Activated CD4-positive, alpha-beta memory T cell treated with anti-CD3 and anti-CD28 coated beads for 36 hours (primary cell): ENCODE measurements at regions of chr4 and their contacts with region 1.

Region 1: DNA sequence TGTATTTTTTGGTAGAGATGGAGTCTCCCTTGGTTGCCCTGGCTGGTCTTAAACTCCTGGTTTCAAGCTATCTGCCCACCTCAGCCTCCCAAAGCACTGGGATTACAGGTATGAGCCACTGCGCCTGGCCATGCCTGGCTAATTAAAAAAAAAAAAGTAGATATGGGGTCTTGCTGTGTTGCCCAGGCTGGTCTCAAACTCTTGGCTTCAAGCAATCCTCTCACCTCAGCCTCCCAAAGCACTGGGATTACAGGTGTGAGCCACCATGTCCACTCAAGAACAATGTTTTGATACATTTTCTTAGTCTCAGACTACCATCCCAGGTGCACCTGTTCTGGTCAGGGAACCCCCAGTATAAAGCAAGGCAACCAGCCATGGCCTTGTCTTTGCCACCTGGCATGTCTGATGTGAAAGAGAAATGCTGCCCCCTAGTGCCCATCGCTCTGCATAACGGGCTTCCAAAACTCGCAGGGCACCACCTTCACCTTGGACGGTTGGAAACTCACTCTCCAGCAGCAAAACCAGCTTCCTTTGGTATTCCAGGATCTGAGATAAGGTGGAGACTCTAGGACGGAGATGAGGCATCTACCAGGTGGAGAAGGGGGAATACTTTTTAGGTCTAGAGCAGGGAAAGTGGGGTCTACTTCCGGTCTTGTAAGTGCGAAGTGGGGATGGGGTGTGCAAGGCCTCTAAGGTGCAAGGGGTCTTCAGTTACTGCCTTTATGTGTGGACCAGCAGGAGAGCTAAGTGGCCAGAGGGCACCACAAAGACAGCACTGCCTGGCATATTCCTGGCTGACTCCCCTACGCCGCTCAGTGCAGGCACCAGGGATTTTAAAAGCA is 47.7 kb upstream of the AFAP1 start:
- DNase-seq: peak; percentile 87
- H3K4me3 Mint-ChIP-seq: no peak overlapping the region
- H3K27ac Mint-ChIP-seq: no peak overlapping the region
- H3K4me1 Mint-ChIP-seq: peaks cover 7% of the 10 kb centered on the region
- H3K27me3 Mint-ChIP-seq: peaks cover 4% of the 10 kb centered on the region

Region 2: DNA sequence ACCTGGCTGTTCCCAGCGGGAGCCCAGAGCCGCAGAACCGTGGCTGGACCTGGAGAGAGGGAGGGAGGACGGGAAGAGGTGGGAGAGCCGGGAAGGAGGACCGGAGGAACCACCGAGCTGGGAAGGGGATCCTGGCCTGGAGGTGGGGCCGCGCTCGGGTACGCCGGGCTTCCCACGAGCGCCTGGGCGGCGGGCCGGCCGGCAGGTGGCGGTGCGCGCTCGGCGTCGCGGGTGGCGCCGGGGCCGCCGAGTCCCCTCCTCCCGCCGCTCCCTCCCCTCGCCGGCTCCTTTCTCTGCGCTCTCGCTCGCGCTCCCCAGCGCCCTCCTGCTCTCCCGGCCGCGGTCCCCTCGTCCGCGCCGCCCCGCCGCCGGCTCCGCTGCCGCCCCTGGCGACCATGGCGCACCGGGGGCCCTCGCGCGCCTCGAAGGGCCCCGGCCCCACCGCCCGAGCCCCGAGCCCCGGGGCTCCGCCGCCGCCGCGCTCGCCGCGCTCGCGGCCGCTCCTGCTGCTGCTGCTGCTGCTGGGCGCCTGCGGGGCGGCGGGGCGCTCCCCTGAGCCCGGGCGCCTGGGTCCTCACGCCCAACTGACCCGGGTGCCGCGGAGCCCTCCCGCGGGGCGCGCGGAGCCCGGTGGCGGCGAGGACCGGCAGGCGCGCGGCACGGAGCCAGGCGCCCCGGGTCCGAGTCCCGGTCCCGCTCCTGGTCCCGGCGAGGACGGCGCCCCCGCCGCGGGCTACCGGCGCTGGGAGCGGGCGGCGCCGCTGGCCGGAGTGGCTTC is 794.9 kb before region 1 on chr4 and contains the start of gene SORCS2:
- CTCF ChIA-PET with region 1: interaction called, 3 read pairs
- POLR2A ChIA-PET with region 1: no interaction called
- intact Hi-C with region 1: loop called (anchors 10 kb)
- DNase-seq: peak; percentile 60
- H3K4me3 Mint-ChIP-seq: no peak within 1 kb of the TSS
- H3K27ac Mint-ChIP-seq: no peak within 1 kb of the TSS
- H3K4me1 Mint-ChIP-seq: peaks cover 2% of the 10 kb centered on the region
- H3K27me3 Mint-ChIP-seq: peaks cover 55% of the 10 kb centered on the region
- total RNA-seq, gene SORCS2: 0.07 TPM

Region 3: DNA sequence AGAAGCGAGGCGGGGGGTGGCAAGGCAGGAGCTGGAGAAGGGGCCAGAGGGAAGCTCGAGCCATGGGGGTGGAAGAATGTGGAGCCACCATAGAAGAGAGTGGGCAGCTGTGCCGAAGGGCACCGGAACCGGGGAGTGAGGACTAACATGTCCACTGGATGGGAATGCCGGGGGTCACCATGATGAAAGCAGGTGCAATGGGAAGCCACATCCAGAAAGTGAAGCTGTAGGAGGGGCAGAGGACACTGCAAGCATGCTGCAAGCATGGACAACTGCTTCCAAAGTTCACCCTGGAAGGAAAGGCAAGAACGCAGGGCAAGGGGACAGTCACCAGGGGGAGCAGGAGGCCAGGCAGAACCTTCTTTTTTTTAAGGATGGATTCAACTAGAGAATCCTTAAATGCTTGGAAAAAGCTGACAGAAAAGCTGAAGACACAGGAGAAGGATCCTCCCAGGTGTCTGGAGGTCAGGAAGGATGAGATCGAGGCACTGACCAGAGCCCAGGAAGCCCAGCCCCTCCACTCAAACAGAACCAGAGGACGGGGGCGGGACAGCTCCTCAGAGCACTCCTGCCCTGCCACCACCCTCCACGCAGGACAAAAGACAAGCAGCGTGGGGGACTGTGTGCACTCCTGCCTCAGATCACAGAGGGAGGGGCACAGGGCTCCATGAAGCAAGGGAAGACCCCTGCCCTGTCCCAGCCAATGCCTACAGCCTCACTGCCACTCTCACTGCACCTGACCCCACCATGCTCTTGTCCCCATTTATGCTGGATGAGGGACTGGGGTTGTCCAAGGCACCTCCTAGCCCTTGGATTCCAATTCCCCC is 216.9 kb before region 1 on chr4:
- CTCF ChIA-PET with region 1: interaction called, 14 read pairs
- POLR2A ChIA-PET with region 1: no interaction called
- intact Hi-C with region 1: no loop called
- DNase-seq: peak; percentile 48
- H3K4me3 Mint-ChIP-seq: no peak overlapping the region
- H3K27ac Mint-ChIP-seq: peak overlapping the region; percentile 78
- H3K4me1 Mint-ChIP-seq: peaks cover 27% of the 10 kb centered on the region
- H3K27me3 Mint-ChIP-seq: no peaks in the 10 kb centered on the region

Region 4: GRCh38 chr4:7939377-7940108 is 47.8 kb before region 1 on chr4 and contains the start of gene AFAP1:
- CTCF ChIA-PET with region 1: interaction called, 16 read pairs
- POLR2A ChIA-PET with region 1: no interaction called
- intact Hi-C with region 1: loop called (anchors 1 kb)
- DNase-seq: peak; percentile 91
- H3K4me3 Mint-ChIP-seq: peak within 1 kb of the TSS; percentile 76
- H3K27ac Mint-ChIP-seq: no peak within 1 kb of the TSS
- H3K4me1 Mint-ChIP-seq: peaks cover 31% of the 10 kb centered on the region
- H3K27me3 Mint-ChIP-seq: no peaks in the 10 kb centered on the region
- total RNA-seq, gene AFAP1: 37.7 to 38.4 TPM

Region 5: GRCh38 chr4:7973545-7973981 is 13.8 kb before region 1 on chr4:
- CTCF ChIA-PET with region 1: interaction called, 12 read pairs
- POLR2A ChIA-PET with region 1: no interaction called
- intact Hi-C with region 1: no loop called
- DNase-seq: peak; percentile 65
- H3K4me3 Mint-ChIP-seq: peak overlapping the region; percentile 98
- H3K27ac Mint-ChIP-seq: peak overlapping the region; percentile 100
- H3K4me1 Mint-ChIP-seq: peaks cover 47% of the 10 kb centered on the region
- H3K27me3 Mint-ChIP-seq: no peaks in the 10 kb centered on the region